H1 (cell line): ENCODE measurements at regions of chr2 and their contacts with region 1.

Region 1: DNA sequence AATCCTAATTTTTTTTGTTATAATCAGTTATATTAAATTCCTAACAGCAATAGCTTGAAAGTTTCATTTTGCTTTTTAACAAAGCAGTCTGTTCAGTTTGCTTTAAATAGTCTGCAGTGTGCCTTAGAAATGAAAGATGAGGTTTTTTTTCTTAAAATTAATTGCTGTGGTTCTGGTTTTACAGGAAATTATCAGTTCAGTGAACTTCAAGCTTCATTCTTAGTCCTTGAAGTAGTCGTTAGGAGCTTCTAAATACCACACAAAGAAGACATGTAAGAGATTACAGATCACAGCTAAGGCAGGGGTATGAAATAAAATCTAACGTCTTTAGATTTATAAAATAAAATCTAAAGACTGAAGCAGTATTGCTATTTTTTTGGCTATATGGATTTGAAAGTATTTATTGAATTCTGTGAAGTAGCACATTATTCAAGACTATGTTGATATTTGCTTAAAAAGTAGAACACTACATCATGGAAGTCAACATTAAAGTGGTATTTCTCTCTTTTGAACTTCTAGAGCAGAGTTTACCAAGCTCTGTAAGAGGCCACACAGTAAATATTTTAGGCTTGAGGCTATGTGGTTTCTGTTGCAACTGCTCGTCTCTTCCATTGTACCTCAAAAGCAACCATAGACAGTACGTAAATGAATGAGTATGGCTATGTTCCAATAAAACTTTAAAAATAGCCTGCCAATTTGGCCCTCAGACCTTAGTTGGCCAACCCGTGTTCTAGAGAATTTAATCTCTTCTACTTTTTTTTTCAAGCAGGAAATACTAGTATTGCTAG is 81.5 kb upstream of the STON1 start:
- DNase-seq: no peak
- H3K4me3 ChIP-seq: no peak overlapping the region
- H3K27ac ChIP-seq: no peak overlapping the region
- H3K4me1 ChIP-seq: peaks cover 0 to 3% (median under 1%) of the 10 kb centered on the region in 4 experiments; a peak in 3 of 7 replicates
- H3K27me3 ChIP-seq: no peaks in the 10 kb centered on the region
- CTCF ChIP-seq: no peak
- EP300 ChIP-seq: no peak
- POLR2A ChIP-seq: no peak
- RAD21 ChIP-seq: no peak

Region 2: DNA sequence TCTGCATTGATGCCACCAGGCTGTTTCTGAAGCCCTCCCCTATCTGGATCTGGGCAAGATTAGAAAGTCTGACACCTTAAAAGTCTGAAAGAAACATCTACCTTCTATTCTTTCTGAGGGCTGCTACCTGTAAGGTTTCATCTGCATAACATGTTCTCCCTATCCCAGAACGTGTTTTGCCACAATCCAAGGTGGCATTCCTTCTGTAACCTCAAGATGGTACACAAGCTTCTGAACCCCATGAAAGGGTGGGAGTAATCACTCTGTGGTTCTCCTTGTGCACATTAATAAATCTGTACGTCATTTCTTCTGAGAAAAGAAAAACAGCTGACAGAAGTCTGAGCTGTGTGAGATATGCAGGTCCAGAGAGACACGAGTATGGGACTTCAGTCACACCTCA is 707.4 kb before region 1 on chr2:
- CTCF ChIA-PET with region 1: no interaction called
- POLR2A ChIA-PET with region 1: no interaction called
- DNase-seq: no peak
- H3K4me3 ChIP-seq: no peak overlapping the region
- H3K27ac ChIP-seq: no peak overlapping the region
- H3K4me1 ChIP-seq: peaks cover 0 to 9% (median 2%) of the 10 kb centered on the region in 4 experiments; a peak in 3 of 7 replicates
- H3K27me3 ChIP-seq: no peaks in the 10 kb centered on the region
- CTCF ChIP-seq: no peak
- EP300 ChIP-seq: no peak
- POLR2A ChIP-seq: no peak
- RAD21 ChIP-seq: no peak

Region 3: GRCh38 chr2:48391616-48392015 is 56.9 kb before region 1 on chr2:
- CTCF ChIA-PET with region 1: no interaction called
- POLR2A ChIA-PET with region 1: no interaction called
- DNase-seq: no peak
- H3K4me3 ChIP-seq: no peak overlapping the region
- H3K27ac ChIP-seq: no peak overlapping the region
- H3K4me1 ChIP-seq: no peaks in the 10 kb centered on the region
- H3K27me3 ChIP-seq: no peaks in the 10 kb centered on the region
- CTCF ChIP-seq: no peak
- EP300 ChIP-seq: no peak
- POLR2A ChIP-seq: no peak
- RAD21 ChIP-seq: no peak

Region 4: GRCh38 chr2:48471048-48471474 is 22.6 kb after region 1 on chr2:
- CTCF ChIA-PET with region 1: interaction called, 11 read pairs
- POLR2A ChIA-PET with region 1: interaction called, 3 read pairs
- DNase-seq: no peak
- H3K4me3 ChIP-seq: no peak overlapping the region
- H3K27ac ChIP-seq: no peak overlapping the region
- H3K4me1 ChIP-seq: peaks cover 0 to 5% (median 0%) of the 10 kb centered on the region in 4 experiments; a peak in 3 of 7 replicates
- H3K27me3 ChIP-seq: no peaks in the 10 kb centered on the region
- CTCF ChIP-seq: peak in 2 of 3 experiments; percentile 42 to 76; a peak in 2 of 4 replicates
- EP300 ChIP-seq: no peak
- POLR2A ChIP-seq: no peak
- RAD21 ChIP-seq: peak; percentile 49 to 59

Region 5: GRCh38 chr2:48548840-48549239 is 100.4 kb after region 1 on chr2:
- CTCF ChIA-PET with region 1: no interaction called
- POLR2A ChIA-PET with region 1: no interaction called
- DNase-seq: no peak
- H3K4me3 ChIP-seq: no peak overlapping the region
- H3K27ac ChIP-seq: no peak overlapping the region
- H3K4me1 ChIP-seq: no peaks in the 10 kb centered on the region; a peak in 1 of 7 replicates
- H3K27me3 ChIP-seq: no peaks in the 10 kb centered on the region; a peak in 1 of 7 replicates
- CTCF ChIP-seq: no peak
- EP300 ChIP-seq: no peak
- POLR2A ChIP-seq: no peak
- RAD21 ChIP-seq: no peak